ENCODE measurements at regions of chr13 and their contacts with region 1.

Region 1: DNA sequence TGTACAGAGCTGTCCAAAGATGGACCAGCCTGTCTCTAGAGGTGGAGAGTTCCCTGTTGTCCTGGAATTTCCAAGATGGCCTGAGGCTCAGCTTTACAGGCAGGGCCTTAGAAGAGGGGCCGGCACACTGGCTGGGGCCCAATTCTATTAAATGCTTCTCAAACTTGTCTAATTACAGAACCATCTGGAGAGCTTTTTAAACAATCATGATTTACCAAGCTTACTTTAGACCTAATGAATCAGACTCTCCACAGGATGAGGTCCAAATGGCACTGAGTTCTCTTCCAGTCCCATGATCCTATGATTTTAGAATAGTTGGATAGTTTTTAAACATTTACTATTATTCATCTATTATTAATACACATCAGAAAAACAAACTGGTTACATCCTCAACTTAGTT is 123.5 kb downstream of the DNAJC3 start:
- DNase-seq: no peak
- CTCF ChIP-seq: no peak

Region 2: DNA sequence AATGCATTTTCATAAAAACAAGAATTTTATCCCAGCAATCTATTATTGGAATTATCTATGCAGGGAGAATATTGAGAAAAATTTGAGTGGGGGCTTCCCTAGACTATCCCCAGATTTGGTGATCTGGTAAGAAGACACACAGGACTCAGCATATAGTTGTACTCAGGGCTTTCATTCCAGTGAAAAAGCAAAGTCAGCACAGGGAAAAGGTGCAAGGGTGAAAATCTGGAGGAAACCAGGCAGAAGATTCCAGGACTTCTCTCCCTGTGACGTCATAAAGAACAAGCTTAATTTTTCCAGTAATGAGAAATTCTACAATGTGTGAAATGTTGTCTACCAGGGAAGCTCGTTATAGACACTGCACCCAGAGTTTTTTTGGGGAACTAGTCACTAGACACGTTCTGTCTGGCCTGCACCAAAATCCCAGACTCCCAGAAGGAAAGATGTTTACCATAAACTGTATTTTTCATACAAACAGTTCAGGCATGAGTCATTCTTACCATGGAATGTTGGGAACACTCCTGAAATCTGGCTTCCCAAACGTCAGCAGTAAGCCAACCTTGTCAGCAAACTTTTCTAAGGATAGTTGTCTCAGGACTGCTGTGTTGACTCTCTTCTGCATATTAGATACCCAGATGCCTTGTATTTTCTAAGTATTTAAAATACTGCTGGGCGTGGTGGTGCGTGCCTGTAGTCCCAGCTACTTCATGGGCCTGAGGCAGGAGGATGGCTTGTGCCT is 16.1 kb before region 1 on chr13:
- CTCF ChIA-PET with region 1: interaction called, 12 read pairs
- POLR2A ChIA-PET with region 1: no interaction called
- DNase-seq: no peak
- CTCF ChIP-seq: no peak

Measured in GM10248 (cell line).